ENCODE measurements at regions of chr10 and their contacts with region 1.

Region 1: DNA sequence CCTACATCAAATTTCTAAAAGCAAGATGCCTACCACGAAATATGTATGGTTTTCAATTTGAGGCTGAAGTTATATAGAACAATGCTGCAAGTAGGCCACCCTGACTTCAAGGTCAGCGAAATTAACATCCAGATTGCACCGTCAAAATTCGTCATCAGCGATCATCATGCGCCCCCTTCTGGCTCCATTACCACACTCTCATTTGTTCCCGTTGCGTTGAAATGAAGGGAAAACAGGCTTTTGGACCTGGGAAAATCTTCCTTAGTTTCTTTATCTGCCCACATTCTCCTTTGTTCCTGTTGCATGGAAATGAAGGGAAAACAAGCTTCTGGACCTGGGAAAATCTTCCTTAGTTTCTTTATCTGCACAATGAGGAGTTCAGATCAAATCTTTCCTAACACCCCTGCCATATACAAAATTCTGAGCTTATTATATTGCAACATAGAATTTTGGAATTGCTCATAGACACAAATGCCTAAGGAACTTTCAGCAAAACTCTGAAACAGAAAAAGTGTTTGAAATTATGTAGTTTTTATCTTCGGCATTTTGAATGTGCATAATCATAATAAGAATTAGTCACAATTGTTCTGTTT is 98.2 kb upstream of the PRKCQ start:
- DNase-seq: peak; percentile 62 to 63
- H3K4me3 ChIP-seq: no peak overlapping the region
- H3K27ac ChIP-seq: no peak overlapping the region
- H3K4me1 ChIP-seq: no peaks in the 10 kb centered on the region
- H3K27me3 ChIP-seq: no peaks in the 10 kb centered on the region
- CTCF ChIP-seq: peak in 5 of 6 experiments; percentile 34 to 82 (median 78)
- POLR2A ChIP-seq: no peak

Region 2: GRCh38 chr10:6423004-6423403 is 255.3 kb before region 1 on chr10:
- intact Hi-C with region 1: loop called (anchors 10 kb)
- DNase-seq: no peak
- H3K4me3 ChIP-seq: no peak overlapping the region
- H3K27ac ChIP-seq: no peak overlapping the region
- H3K4me1 ChIP-seq: no peaks in the 10 kb centered on the region
- H3K27me3 ChIP-seq: no peaks in the 10 kb centered on the region
- CTCF ChIP-seq: no peak
- POLR2A ChIP-seq: no peak

Region 3: DNA sequence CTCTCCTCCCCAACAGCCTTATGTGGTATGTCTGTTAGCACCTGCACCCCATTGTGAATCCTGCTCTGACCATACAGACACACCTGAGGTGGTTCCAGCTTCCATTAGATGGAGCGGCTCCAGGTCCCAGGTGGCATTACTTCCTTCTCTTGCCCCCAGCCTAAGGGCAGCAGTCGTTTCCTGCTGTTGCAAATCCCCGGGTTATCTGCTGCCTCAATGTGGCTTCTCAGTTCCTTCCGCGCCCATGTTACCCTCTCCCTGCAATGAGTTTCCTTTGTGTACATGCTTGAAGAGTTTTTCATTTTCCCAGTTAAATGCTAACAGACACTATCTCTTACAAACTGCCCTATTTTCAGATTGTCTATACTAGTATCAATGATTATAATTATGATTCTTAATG is 35.4 kb before region 1 on chr10:
- intact Hi-C with region 1: no loop called
- DNase-seq: no peak
- H3K4me3 ChIP-seq: no peak overlapping the region
- H3K27ac ChIP-seq: no peak overlapping the region
- H3K4me1 ChIP-seq: no peaks in the 10 kb centered on the region
- H3K27me3 ChIP-seq: no peaks in the 10 kb centered on the region
- CTCF ChIP-seq: no peak
- POLR2A ChIP-seq: no peak

Region 4: DNA sequence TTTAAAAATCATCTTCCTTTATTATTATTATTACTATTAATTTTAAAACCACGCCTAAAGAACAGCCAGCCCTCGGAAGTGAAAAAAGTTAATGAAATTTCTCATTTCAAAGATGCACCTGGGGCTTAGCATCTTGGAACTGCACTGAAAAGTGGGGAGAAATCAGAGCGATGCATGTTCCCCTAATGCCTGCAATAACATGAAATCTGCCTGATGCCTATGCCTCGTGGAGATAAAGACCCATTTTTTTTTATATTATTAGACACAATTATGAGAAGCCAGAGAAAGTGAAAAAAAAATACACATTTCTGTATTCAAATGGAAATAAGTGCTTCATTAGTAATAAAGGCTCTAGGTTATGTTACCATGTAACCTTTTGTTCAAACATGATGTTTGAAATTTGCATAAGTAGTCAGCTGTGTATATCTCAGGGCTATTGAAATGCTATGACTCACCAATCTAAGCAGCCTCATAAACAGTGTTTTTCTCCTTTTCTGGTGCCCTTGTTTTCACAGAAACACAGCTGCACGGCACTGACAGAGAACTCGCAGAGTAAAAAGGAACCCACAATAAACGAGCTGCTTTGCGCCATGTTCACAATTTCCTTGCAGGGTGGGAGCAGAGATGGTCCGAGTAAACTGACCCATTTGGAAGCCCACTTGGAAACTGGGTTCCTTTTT is 77.6 kb after region 1 on chr10:
- intact Hi-C with region 1: no loop called
- DNase-seq: no peak
- H3K4me3 ChIP-seq: no peak overlapping the region
- H3K27ac ChIP-seq: no peak overlapping the region
- H3K4me1 ChIP-seq: no peaks in the 10 kb centered on the region
- H3K27me3 ChIP-seq: no peaks in the 10 kb centered on the region
- CTCF ChIP-seq: no peak
- POLR2A ChIP-seq: no peak

Measured in thyroid gland (tissue), 4 donors.